Lower leg skin (tissue), 4 donors: ENCODE measurements at regions of chr1 and their contacts with region 1.

Region 1: GRCh38 chr1:64136752-64137411 is 66.5 kb upstream of the UBE2U start:
- DNase-seq: peak; percentile 85 to 96
- H3K4me3 ChIP-seq: no peak overlapping the region
- CTCF ChIP-seq: peak in 1 of 3 donors; percentile 86
- POLR2A ChIP-seq: no peak

Region 2: GRCh38 chr1:63691701-63692425 is 445.0 kb before region 1 on chr1:
- intact Hi-C with region 1: loop called (anchors 10 kb)
- DNase-seq: peak in 1 of 2 donors; percentile 75
- H3K4me3 ChIP-seq: no peak overlapping the region
- CTCF ChIP-seq: peak in 1 of 3 donors; percentile 33
- POLR2A ChIP-seq: no peak

Region 3: DNA sequence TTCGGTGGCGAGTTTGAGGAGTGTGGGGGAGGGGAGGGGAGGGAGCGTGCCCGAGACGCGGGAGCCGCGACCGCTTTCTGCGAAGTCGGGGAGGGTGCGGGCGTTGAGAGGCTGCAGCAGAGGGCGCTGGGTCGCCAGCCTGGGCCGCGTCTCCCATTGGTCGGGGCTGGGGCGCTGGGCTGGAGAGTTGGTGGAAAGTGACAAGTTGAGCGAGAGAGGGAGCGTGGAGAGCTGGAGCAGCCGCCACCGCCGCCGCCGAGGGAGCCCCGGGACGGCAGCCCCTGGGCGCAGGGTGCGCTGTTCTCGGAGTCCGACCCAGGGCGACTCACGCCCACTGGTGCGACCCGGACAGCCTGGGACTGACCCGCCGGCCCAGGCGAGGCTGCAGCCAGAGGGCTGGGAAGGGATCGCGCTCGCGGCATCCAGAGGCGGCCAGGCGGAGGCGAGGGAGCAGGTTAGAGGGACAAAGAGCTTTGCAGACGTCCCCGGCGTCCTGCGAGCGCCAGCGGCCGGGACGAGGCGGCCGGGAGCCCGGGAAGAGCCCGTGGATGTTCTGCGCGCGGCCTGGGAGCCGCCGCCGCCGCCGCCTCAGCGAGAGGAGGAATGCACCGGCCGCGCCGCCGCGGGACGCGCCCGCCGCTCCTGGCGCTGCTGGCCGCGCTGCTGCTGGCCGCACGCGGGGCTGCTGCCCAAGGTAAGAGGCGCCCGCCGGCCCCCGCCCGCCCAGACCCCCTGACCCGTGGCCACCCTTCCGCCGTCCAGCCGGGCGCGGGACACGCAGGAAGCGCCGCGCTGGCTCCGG is 362.9 kb before region 1 on chr1 and contains the start of gene ROR1:
- intact Hi-C with region 1: loop called (anchors 5 kb)
- DNase-seq: peak; percentile 83 to 97
- H3K4me3 ChIP-seq: peak within 1 kb of the TSS; percentile 57
- CTCF ChIP-seq: peak in 1 of 3 donors; percentile 20
- POLR2A ChIP-seq: no peak
- total RNA-seq, gene ROR1: 12.9 to 28.6 (median 22.5) TPM

Region 4: GRCh38 chr1:64235181-64235580 is 98.3 kb after region 1 on chr1:
- intact Hi-C with region 1: loop called (anchors 5 kb)
- DNase-seq: no peak
- H3K4me3 ChIP-seq: no peak overlapping the region
- CTCF ChIP-seq: no peak
- POLR2A ChIP-seq: no peak